ENCODE measurements at regions of chr6 and their contacts with region 1.

Region 1: DNA sequence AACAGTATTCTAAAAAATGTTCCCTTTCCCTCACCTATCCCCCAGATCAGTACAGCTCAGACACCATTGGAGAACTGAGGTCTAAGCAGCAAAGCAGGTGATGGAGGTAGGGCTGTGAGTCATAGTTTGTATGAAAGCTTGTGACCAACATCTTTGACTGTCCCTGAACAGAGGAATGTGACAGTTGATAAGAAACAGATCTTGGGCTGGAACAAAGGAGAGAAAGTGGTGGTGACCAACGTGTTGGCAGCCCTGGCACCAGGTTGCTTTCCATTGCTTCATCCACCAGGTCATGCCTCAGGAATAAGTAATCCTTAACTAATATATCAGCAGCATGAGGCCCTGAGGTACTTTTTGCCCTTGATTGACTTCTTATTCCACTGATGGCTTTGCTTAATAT is 19.9 kb upstream of the CRIP3 start:
- DNase-seq: no peak
- H3K4me3 Mint-ChIP-seq: no peak overlapping the region
- H3K27ac Mint-ChIP-seq: no peak overlapping the region
- H3K4me1 Mint-ChIP-seq: peaks cover 13% of the 10 kb centered on the region
- H3K27me3 Mint-ChIP-seq: peaks cover 3% of the 10 kb centered on the region

Region 2: DNA sequence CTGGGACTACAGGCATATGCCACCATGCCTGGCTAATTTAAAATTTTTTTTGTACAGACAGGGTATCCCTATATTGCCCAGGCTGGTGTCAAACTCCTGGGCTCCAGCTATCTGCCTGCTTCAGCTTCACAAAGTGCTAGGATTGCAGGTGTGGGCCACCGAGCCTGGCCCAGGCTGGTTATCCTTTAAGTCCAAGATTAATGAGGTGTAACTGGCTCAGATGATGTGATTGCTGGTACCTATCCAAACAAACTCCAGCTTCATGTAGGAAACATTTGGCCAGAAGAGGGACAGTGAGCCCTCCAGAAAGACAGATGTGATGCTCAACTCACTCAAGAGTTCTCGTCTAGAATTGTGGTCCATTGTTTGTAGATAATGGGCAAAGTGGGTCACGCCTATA is 50.1 kb after region 1 on chr6:
- intact Hi-C with region 1: no loop called
- DNase-seq: no peak
- H3K4me3 Mint-ChIP-seq: no peak overlapping the region
- H3K27ac Mint-ChIP-seq: no peak overlapping the region
- H3K4me1 Mint-ChIP-seq: peaks cover 27% of the 10 kb centered on the region
- H3K27me3 Mint-ChIP-seq: peaks cover 20% of the 10 kb centered on the region

Region 3: DNA sequence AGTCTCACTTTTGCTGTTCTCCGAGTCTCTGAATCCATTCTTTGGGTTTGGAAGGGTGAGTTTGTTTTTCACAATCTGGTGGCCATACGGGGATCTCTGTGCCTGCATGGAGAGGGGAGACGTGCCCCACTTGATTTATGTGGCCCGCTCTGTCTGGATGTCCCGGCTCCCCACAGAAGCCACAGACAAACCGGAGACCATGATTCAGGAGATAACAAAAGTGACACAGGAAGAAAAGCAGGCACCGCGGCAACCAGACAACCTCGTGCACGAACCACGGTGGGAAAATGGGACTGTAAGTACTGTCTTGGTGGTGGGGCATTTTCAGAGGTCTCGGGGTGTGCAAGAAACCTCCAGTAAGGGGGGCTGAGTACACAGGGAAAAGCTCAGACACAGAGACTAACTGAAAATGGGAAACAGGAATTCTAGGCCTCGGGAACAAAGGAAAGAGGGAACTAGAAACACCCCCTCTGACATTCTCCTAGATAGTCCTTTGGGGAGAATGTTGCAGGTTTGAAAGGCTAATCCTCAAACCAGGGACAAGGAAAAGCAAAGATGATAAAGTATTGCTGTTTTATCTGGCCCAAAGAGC is 63.0 kb after region 1 on chr6:
- intact Hi-C with region 1: loop called (anchors 10 kb)
- DNase-seq: peak; percentile 79
- H3K4me3 Mint-ChIP-seq: peak overlapping the region; percentile 50
- H3K27ac Mint-ChIP-seq: no peak overlapping the region
- H3K4me1 Mint-ChIP-seq: peaks cover 20% of the 10 kb centered on the region
- H3K27me3 Mint-ChIP-seq: peaks cover 70% of the 10 kb centered on the region